Upper lobe of right lung (tissue), 1 donor: ENCODE measurements at regions of chr7 and their contacts with region 1.

Region 1: GRCh38 chr7:105652359-105652993 is 71.2 kb upstream of the EFCAB10 start:
- DNase-seq: peak; percentile 88
- ATAC-seq: peak; percentile 92
- H3K4me3 ChIP-seq: no peak overlapping the region
- H3K27ac ChIP-seq: no peak overlapping the region
- H3K4me1 ChIP-seq: peaks cover 28% of the 10 kb centered on the region
- H3K27me3 ChIP-seq: no peaks in the 10 kb centered on the region
- CTCF ChIP-seq: peak; percentile 87

Region 2: DNA sequence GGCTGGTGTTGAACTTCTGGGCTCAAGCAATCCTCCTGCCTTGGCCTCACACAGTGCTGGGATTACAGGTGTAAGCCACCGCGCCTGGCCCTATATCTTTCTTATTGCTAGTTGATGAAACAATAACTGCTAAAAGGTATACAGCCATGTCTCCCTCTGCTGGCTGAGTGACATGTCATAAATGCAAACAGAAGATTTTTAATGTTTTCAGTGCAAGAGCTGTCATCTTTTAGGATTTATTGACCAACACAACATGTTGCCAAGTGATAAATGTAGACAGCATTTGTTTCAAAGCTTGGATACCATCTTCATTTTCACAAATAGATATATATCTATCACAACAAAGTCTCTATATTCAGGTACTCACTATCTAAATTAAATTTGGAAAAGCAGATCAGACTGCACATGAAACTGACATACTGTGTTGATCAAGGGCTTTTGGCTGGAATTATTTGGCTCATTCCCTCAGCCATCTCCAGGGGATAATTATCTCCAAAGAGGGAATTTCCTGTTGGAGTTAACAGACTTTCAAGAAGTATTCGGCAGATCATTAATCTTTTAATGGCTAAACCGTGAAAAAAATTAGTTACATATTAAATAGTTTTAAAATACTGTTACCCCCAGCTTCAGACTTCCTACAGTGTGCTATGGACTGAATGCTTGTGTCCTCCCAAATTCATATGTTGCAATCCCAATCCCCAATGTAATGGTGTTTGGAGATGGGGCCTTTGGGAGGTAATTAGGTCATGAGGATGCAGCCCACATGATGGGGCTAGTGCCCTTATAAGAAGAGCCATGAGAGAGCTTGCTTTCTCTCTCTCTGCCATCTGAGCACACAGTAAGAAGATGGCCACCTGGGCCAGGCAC is 222.5 kb before region 1 on chr7:
- intact Hi-C with region 1: no loop called
- DNase-seq: peak; percentile 36
- ATAC-seq: peak; percentile 67
- H3K4me3 ChIP-seq: no peak overlapping the region
- H3K27ac ChIP-seq: no peak overlapping the region
- H3K4me1 ChIP-seq: peaks cover 6% of the 10 kb centered on the region
- H3K27me3 ChIP-seq: no peaks in the 10 kb centered on the region
- CTCF ChIP-seq: peak; percentile 50

Region 3: GRCh38 chr7:105759670-105760550 is 107.4 kb after region 1 on chr7:
- intact Hi-C with region 1: loop called (anchors 10 kb)
- DNase-seq: no peak
- ATAC-seq: peak; percentile 72
- H3K4me3 ChIP-seq: no peak overlapping the region
- H3K27ac ChIP-seq: no peak overlapping the region
- H3K4me1 ChIP-seq: no peaks in the 10 kb centered on the region
- H3K27me3 ChIP-seq: no peaks in the 10 kb centered on the region
- CTCF ChIP-seq: peak; percentile 57

Region 4: GRCh38 chr7:106009403-106010226 is 357.1 kb after region 1 on chr7:
- intact Hi-C with region 1: loop called (anchors 10 kb)
- DNase-seq: peak; percentile 95
- ATAC-seq: peak; percentile 99
- H3K4me3 ChIP-seq: no peak overlapping the region
- H3K27ac ChIP-seq: no peak overlapping the region
- H3K4me1 ChIP-seq: peaks cover 8% of the 10 kb centered on the region
- H3K27me3 ChIP-seq: no peaks in the 10 kb centered on the region
- CTCF ChIP-seq: peak; percentile 96

Region 5: DNA sequence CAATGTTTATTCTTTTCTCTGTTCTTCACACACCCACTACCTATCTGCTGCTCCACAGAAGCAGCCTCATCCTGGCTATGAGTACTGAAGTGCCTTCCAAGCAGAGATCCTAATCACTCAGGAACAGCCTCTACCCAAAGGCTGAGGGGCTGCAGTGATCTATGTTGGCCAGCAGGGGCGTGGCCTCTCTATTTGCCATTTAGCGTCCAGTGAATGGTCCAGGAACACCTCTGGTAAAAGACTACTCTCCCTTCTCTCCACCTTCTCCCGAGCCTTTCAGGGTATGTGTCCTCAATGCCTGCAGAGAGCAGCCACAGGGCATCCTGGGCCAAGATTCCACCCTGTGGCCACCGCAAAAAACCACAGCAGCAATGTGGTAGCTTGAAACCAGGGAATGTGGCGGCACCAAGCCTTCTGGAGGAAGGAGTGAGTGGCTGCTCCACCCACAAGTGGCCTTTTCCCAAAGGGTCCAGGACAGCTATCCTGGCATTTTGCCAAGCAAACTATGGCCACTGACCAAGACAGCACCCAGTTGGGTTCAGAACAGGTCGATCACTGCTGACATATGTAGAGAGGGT is 388.8 kb after region 1 on chr7:
- intact Hi-C with region 1: loop called (anchors 10 kb)
- DNase-seq: no peak
- ATAC-seq: peak; percentile 69
- H3K4me3 ChIP-seq: no peak overlapping the region
- H3K27ac ChIP-seq: no peak overlapping the region
- H3K4me1 ChIP-seq: peaks cover 10% of the 10 kb centered on the region
- H3K27me3 ChIP-seq: no peaks in the 10 kb centered on the region
- CTCF ChIP-seq: peak; percentile 78